ENCODE measurements at regions of chr15 and their contacts with region 1.

Region 1: DNA sequence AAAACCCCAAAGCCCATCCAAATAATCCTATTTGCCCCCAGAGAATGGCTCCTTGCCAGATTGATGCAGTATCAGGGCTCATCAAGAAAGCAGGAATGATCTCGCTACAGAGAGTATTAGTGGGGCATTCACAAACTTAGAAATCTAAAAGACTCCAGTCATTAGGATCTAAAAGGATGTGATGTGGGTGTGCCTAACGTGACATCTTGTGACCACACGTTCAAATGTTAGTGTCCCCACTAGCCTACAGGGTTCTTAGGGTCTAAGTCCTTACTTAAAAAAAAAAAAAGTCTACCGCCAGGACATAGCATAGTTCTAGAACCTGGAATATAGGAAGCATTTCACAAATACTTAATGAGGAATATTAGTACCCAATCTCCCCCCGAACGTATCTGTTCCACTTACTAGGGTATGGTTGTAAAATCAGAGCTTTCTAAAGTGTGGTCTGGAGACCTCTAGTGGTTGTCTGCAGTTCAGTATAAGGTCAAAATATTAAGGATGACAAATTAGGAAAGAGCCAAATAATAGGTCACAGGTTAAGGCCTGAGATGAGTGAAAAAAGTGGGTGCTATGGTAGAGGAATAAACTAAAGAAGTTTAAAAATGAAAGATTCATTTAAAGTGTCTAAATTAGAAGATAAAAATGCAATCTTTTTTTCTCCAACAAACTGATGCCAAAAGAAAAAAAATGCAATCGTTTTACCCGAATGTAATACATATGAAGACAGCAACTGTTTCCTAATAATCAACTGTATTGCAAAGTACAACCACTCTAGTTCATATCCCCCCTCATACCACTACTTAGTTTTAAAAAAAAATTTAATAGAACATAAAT is 4.2 kb upstream of the CHRM5 start:
- DNase-seq: no peak
- H3K4me3 Mint-ChIP-seq: no peak overlapping the region
- H3K27ac Mint-ChIP-seq: no peak overlapping the region
- H3K4me1 Mint-ChIP-seq: no peaks in the 10 kb centered on the region
- H3K27me3 Mint-ChIP-seq: peaks cover 6% of the 10 kb centered on the region

Region 2: DNA sequence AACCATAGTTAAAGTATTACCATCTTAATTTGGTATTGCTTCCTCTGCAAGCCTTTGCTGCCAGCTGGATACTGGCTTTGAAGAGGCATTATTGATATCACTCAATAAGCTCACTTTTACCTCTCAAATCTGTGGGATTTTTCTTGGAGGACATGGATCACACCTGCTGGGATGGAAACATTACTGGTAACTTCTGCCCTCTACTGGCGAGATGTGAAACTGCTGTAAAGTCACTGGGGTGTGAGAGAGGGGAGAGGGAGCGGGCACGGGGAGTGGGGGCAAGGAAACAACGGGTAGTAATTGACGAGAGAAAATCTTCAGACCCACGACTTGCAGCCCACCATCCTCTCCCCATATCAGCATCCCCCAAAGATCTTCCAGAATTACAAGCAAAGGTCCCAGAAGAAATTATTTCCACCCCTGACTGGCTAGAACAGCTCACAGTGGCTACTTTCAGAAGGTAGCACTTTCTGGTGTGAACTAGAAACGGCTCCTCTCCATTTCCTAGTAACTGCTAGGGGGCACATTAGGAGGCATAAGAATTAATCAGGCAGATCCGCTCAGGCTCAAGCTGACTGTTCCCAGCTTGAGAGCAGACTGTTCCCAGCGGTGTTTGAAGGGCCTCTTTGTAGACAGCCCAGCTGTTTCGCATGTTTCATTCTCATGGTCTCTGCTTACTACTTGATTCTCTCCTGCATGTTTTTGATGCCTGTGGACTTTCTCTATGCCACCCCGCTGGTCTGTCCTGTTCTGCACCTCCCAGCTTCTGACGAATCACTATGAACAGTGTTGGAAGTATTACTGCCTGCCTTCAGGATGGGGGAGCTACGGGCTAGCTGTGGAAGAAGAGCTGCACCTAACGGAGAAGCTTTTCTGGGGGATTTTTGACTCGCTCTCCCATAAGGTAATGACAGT is 226.1 kb before region 1 on chr15:
- intact Hi-C with region 1: loop called (anchors 5 kb)
- DNase-seq: no peak
- H3K4me3 Mint-ChIP-seq: no peak overlapping the region
- H3K27ac Mint-ChIP-seq: no peak overlapping the region
- H3K4me1 Mint-ChIP-seq: no peaks in the 10 kb centered on the region
- H3K27me3 Mint-ChIP-seq: peaks cover 2% of the 10 kb centered on the region

Region 3: DNA sequence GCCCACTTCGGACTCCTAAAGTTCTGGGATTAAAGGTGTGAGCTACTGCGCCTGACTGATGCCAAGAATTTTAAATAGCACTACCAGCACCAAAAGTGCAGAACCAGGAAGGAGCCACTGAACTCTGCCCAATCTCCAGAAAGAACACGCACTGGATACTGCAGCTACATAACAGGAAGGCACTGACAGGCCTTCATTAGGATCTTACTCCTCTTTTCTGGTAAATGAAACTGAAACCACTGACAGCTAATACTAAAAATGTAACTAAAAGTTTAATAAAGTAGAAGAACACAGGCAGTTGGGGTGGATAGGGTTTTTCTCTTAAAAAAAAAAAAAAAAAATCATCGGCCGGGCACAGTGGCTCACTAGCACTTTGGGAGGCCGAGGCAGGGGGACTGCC is 69.9 kb before region 1 on chr15:
- intact Hi-C with region 1: loop called (anchors 2 kb)
- DNase-seq: no peak
- H3K4me3 Mint-ChIP-seq: no peak overlapping the region
- H3K27ac Mint-ChIP-seq: no peak overlapping the region
- H3K4me1 Mint-ChIP-seq: peaks cover 12% of the 10 kb centered on the region
- H3K27me3 Mint-ChIP-seq: no peaks in the 10 kb centered on the region